OCI-LY7 (cell line): ENCODE measurements at regions of chr7 and their contacts with region 1.

Region 1: DNA sequence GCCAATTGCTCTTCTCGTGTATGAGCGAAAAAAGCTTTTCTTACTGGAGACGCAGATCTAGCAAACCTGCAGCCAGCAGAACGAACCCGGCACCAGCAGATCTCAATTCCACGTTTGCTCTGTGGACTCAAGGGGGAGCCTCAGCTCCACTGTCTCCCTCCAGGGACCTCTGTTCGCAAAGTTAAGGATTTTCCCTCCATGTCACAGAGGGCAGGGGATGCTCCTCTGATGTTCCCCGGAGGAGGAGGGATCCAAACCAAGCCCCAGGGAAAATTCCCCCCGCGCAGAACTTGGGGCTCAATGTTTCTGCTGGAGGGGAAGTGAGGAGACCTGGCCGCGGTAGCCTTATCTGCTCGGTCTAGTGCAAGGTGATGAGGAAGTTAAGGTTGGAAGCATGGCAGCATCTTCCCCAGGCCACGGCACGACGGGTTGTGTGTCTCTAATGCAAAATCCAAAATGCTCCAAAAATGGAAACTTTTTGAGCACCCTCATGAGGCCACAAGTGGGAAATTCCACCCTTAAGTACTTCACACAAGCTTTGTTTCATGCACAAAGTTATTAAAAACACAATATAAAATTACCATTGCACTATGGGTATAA is 9.0 kb downstream of the IQCE start:
- DNase-seq: peak; percentile 40
- H3K4me3 ChIP-seq: no peak overlapping the region
- H3K27ac ChIP-seq: no peak overlapping the region
- H3K4me1 ChIP-seq: peaks cover 4% of the 10 kb centered on the region
- CTCF ChIP-seq: peak; percentile 71

Region 2: DNA sequence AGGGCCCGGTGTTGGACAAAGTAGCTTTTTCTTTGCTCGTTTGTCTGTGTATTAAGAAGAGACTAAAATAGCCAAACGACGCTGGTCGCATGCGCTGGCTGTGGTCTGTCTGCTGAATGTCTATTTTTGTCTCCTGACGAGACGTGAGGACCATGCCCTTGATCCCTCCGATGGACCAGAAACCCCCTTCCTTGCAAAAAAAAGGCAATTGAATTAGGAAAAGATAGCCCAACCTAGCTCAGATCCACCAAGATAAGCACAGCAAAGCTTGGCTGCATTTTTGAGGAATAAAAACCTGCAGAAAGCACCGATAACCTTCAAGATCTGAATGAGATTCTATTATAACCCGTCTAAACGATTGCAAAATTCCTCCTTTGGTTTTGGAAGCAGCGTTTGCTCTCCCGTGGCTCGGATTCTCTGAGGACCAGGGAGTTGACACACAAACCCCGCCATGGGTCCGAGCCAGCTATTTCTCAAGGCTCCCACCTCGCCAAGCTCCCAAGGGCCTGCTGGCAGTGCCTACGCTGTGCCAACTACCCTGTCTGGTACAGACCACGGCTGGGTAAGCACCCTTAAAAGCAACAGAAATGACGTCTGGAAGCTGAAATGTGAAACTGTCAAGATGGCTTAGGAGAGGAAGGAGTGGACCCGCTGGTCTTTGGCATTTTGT is 46.3 kb after region 1 on chr7:
- CTCF ChIA-PET with region 1: no interaction called
- POLR2A ChIA-PET with region 1: no interaction called
- intact Hi-C with region 1: loop called (anchors 5 kb)
- DNase-seq: peak; percentile 26
- H3K4me3 ChIP-seq: no peak overlapping the region
- H3K27ac ChIP-seq: no peak overlapping the region
- H3K4me1 ChIP-seq: peaks cover 26% of the 10 kb centered on the region
- CTCF ChIP-seq: no peak